ENCODE measurements at regions of chr17 and their contacts with region 1.

Region 1: DNA sequence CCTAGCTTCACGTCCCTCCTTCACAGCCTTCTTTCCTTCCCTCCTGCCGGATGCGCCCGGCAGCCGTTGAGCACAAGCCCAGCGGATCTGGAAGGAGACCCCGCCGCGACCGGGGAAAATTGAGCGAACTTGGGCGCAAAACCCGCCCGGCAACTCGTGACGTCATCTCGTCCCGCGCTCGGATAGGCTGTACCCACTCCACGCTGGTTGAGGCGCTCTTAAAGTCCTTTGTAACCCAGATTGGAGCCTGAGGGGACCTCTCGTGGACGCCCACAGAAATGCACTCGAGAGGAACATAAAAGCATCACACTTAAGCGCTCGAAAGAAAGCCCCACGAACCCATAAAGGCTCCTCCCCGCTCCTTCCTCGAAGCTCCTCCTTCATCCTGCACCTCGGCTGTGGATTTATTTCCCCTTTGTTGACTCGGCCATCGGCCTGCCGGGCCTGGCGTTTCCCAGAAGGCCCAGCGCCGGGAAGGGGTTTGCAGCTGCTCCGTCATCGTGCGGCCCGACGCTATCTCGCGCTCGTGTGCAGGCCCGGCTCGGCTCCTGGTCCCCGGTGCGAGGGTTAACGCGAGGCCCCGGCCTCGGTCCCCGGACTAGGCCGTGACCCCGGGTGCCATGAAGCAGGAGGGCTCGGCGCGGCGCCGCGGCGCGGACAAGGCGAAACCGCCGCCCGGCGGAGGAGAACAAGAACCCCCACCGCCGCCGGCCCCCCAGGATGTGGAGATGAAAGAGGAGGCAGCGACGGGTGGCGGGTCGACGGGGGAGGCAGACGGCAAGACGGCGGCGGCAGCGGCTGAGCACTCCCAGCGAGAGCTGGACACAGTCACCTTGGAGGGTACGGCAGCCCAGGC is at the start of gene PSMD3:
- DNase-seq: peak; percentile 100
- H3K4me3 Mint-ChIP-seq: peak within 1 kb of the TSS; percentile 77
- H3K27ac Mint-ChIP-seq: peak within 1 kb of the TSS; percentile 81
- H3K4me1 Mint-ChIP-seq: peaks cover 26% of the 10 kb centered on the region
- H3K27me3 Mint-ChIP-seq: peaks cover 43% of the 10 kb centered on the region
- CTCF ChIP-seq: no peak
- total RNA-seq, gene PSMD3: 2,152 and 2,179 TPM in 2 replicates

Region 2: DNA sequence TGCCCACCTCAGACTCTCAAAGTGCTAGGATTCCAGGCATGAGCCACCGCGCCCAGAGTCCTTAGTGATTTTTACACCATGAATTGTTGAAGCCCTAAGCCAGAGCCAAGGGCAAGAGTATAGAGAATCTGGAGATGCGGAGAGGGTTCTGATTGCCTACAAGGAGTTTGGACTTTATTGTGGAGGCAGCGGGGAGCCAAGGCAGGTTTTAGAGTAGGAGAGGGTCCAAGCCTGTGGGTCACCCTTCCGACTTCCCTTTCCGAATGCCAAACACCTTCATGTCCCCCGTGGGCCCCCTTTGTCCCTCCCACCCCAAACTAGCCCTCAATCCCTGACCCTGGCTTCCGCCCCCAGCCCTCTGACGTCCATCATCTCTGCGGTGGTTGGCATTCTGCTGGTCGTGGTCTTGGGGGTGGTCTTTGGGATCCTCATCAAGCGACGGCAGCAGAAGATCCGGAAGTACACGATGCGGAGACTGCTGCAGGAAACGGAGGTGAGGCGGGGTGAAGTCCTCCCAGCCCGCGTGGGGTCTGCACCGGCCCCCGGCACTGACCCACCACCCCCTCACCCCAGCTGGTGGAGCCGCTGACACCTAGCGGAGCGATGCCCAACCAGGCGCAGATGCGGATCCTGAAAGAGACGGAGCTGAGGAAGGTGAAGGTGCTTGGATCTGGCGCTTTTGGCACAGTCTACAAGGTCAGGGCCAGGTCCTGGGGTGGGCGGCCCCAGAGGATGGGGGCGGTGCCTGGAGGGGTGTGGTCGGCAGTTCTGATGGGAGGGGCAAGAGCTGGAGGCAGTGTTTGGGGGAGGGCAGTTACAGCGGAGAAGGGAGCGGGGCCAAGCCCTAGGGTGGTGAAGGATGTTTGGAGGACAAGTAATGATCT is 257.4 kb before region 1 on chr17:
- CTCF ChIA-PET with region 1: interaction called, 1,335 read pairs
- intact Hi-C with region 1: no loop called
- DNase-seq: peak; percentile 75
- H3K4me3 Mint-ChIP-seq: peak overlapping the region; percentile 0
- H3K27ac Mint-ChIP-seq: peak overlapping the region; percentile 28
- H3K4me1 Mint-ChIP-seq: peaks cover 38% of the 10 kb centered on the region
- H3K27me3 Mint-ChIP-seq: no peaks in the 10 kb centered on the region
- CTCF ChIP-seq: no peak

Region 3: GRCh38 chr17:39800540-39800939 is 180.0 kb before region 1 on chr17:
- CTCF ChIA-PET with region 1: interaction called, 64 read pairs
- intact Hi-C with region 1: no loop called
- DNase-seq: peak; percentile 85
- H3K4me3 Mint-ChIP-seq: no peak overlapping the region
- H3K27ac Mint-ChIP-seq: no peak overlapping the region
- H3K4me1 Mint-ChIP-seq: peaks cover 17% of the 10 kb centered on the region
- H3K27me3 Mint-ChIP-seq: no peaks in the 10 kb centered on the region
- CTCF ChIP-seq: no peak

Region 4: DNA sequence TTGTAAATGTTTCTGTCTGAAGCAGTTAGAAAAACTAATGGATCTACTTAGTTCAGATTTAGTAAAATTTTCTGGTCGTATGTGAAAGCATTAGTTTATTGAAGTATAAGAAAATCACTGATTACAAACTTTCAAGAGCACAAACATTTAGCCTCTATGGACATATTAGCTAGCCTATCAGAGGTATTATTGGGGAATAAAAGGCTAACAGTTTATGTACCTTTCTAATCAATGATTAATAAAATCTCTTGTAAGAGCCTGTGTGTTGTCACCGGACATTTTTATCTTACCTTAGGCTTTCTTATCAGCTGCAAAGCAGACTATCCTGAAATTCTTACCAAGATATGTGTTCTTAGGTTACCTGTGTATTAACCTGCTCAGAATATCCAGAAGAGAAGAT is 91.4 kb before region 1 on chr17:
- CTCF ChIA-PET with region 1: interaction called, 6,506 read pairs
- intact Hi-C with region 1: loop called (anchors 1 kb)
- DNase-seq: peak; percentile 82
- H3K4me3 Mint-ChIP-seq: no peak overlapping the region
- H3K27ac Mint-ChIP-seq: no peak overlapping the region
- H3K4me1 Mint-ChIP-seq: peaks cover 26% of the 10 kb centered on the region
- H3K27me3 Mint-ChIP-seq: peaks cover 22% of the 10 kb centered on the region
- CTCF ChIP-seq: no peak

Region 5: GRCh38 chr17:40026816-40027613 is 46.4 kb after region 1 on chr17:
- CTCF ChIA-PET with region 1: interaction called, 36 read pairs
- intact Hi-C with region 1: no loop called
- DNase-seq: peak; percentile 100
- H3K4me3 Mint-ChIP-seq: no peak overlapping the region
- H3K27ac Mint-ChIP-seq: no peak overlapping the region
- H3K4me1 Mint-ChIP-seq: peaks cover 30% of the 10 kb centered on the region
- H3K27me3 Mint-ChIP-seq: no peaks in the 10 kb centered on the region
- CTCF ChIP-seq: no peak

Region 6: GRCh38 chr17:40287494-40288369 is 307.2 kb after region 1 on chr17 and contains the start of gene CDC6:
- CTCF ChIA-PET with region 1: interaction called, 10 read pairs
- intact Hi-C with region 1: loop called (anchors 5 kb)
- DNase-seq: peak; percentile 100
- H3K4me3 Mint-ChIP-seq: peak within 1 kb of the TSS; percentile 83
- H3K27ac Mint-ChIP-seq: peak within 1 kb of the TSS; percentile 90
- H3K4me1 Mint-ChIP-seq: peaks cover 71% of the 10 kb centered on the region
- H3K27me3 Mint-ChIP-seq: no peaks in the 10 kb centered on the region
- CTCF ChIP-seq: no peak
- total RNA-seq, gene CDC6: 567 and 645 TPM in 2 replicates